ENCODE measurements at regions of chr19 and their contacts with region 1.

Region 1: DNA sequence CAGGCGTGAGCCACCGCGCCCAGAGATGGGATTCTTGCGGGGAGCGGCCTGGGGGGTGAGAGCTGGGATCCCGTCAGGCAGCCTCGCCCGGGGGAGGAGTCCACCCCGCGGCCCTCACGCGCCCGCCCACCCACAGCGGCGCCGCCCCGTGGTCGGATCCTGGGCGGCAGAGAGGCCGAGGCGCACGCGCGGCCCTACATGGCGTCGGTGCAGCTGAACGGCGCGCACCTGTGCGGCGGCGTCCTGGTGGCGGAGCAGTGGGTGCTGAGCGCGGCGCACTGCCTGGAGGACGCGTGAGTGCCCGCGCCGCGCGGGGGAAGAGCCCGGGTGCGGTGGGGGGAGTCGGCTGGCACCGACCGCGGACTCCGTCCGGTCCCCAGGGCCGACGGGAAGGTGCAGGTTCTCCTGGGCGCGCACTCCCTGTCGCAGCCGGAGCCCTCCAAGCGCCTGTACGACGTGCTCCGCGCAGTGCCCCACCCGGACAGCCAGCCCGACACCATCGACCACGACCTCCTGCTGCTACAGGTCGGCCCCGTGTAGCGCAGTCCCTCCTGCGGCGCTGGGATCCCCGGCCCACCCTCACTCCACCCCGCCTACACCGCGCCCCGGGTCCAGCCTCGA is 1.1 kb downstream of the CFD start:
- DNase-seq: no peak

Region 2: GRCh38 chr19:814258-815078 is 46.1 kb before region 1 on chr19:
- intact Hi-C with region 1: no loop called
- DNase-seq: no peak

Region 3: GRCh38 chr19:917323-918151 is 56.9 kb after region 1 on chr19 and contains the start of gene KISS1R:
- intact Hi-C with region 1: loop called (anchors 1 kb)
- DNase-seq: peak in 1 of 10 donors; percentile 89

Region 4: DNA sequence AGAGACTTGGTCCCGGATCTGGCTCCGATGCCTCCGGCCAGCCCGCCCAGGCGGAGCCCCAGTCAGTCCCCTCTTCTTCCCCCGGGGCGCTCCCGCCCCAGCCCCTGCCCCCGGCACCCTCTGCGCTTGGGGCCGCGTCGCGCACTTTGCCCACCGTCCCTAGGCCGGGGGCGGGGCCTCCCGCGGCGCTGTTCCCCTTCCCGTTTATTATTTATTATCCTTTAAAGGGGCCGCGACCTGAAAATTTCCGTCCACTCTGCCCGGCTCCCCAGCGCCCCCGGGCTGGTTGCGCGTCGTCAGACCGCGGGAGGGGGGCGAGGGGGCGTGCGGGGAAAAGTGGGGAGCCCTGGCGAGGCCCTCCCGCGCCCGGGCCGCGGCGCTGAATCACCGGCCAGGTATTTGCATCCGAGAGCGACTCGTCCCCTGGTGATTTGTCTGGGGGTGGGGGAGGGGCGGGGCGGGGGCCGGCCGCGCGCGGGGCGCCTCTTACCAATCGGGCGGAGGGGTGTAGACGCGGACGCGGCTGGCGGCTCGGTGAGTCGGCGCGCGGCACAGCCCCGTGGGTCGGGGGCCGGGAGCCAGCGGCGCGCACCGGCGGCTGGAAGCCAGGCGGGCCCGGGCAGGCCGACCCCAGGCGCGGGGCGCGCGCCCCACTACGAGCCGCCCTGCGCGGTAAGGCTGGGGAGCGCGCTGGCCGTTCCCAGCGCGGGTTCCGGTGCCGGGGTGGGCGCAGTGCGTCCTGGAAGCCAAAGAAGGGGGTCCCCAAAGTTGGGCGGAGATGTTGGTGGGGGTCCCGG is 65.1 kb after region 1 on chr19 and contains the start of gene ARID3A:
- intact Hi-C with region 1: loop called (anchors 1 kb)
- DNase-seq: peak; percentile 63 to 97 (median 76)

Region 5: DNA sequence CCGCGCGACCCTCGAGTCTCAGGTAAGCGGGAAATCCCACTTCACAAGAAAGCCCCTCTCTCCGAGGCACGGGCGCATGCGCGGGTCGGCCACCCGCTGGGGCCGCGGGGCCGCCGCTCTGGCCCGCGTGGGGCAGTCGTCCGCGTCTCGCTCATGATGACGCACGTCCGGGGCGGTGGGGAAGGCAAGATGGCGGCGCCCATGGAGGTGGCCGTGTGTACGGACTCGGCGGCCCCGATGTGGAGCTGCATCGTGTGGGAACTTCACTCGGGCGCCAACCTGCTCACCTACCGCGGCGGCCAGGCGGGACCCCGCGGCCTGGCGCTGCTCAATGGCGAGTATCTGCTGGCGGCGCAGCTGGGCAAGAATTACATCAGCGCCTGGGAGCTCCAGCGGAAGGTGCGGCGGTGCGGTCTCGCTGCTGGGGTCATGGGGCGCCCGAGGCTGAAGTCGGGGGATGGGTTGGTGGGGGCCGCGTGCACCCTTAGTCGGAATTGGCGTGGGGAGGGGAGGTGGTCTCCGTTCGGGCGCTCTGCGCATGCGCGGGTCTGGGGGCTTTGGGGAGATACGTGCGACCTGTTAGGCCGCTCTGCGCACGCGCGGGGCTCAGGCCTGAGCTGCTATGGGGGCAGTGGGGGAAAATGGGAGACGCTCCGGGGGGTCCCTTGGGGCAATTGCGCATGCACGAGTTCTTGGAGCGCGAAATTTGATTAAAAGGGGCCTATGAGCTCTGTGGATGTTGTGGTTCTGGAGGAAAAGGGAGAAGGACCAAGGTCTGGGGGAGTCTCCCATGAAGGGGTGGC is 123.8 kb after region 1 on chr19 and contains the start of gene WDR18:
- intact Hi-C with region 1: loop called (anchors 5 kb)
- DNase-seq: peak; percentile 90 to 99 (median 96)

Region 6: GRCh38 chr19:1082172-1082927 is 221.8 kb after region 1 on chr19:
- intact Hi-C with region 1: no loop called
- DNase-seq: no peak